CD4-positive, alpha-beta T cell (primary cell): ENCODE measurements at regions of chr15 and their contacts with region 1.

Region 1: GRCh38 chr15:38610748-38611147 is 46.1 kb upstream of the RASGRP1 start:
- DNase-seq: peak in 5 of 14 experiments; percentile 6 to 59 (median 39)
- ATAC-seq: peak; percentile 89
- H3K4me3 ChIP-seq: no peak overlapping the region
- H3K4me3 Mint-ChIP-seq: peak overlapping the region; percentile 1
- H3K27ac ChIP-seq: peak overlapping the region in 1 of 2 donors; percentile 72
- H3K27ac Mint-ChIP-seq: peak overlapping the region; percentile 70
- H3K4me1 ChIP-seq: peaks cover 37% of the 10 kb centered on the region
- H3K4me1 Mint-ChIP-seq: peaks cover 53% of the 10 kb centered on the region
- H3K27me3 ChIP-seq: no peaks in the 10 kb centered on the region
- H3K27me3 Mint-ChIP-seq: no peaks in the 10 kb centered on the region
- CTCF ChIP-seq: no peak

Region 2: GRCh38 chr15:38275959-38276358 is 334.8 kb before region 1 on chr15:
- CTCF ChIA-PET with region 1: no interaction called
- POLR2A ChIA-PET with region 1: no interaction called
- intact Hi-C with region 1: no loop called
- DNase-seq: no peak
- ATAC-seq: no peak
- H3K4me3 ChIP-seq: no peak overlapping the region
- H3K4me3 Mint-ChIP-seq: no peak overlapping the region
- H3K27ac ChIP-seq: no peak overlapping the region
- H3K27ac Mint-ChIP-seq: no peak overlapping the region
- H3K4me1 ChIP-seq: no peaks in the 10 kb centered on the region
- H3K4me1 Mint-ChIP-seq: no peaks in the 10 kb centered on the region
- H3K27me3 ChIP-seq: no peaks in the 10 kb centered on the region
- H3K27me3 Mint-ChIP-seq: peaks cover 14% of the 10 kb centered on the region
- CTCF ChIP-seq: no peak

Region 3: GRCh38 chr15:38631126-38632075 is 20.7 kb after region 1 on chr15:
- CTCF ChIA-PET with region 1: interaction called, 3 read pairs
- POLR2A ChIA-PET with region 1: interaction called, 11 read pairs
- intact Hi-C with region 1: no loop called
- DNase-seq: peak in 2 of 14 experiments; percentile 29 to 38
- ATAC-seq: peak; percentile 21
- H3K4me3 ChIP-seq: no peak overlapping the region
- H3K4me3 Mint-ChIP-seq: no peak overlapping the region
- H3K27ac ChIP-seq: peak overlapping the region in 1 of 2 donors; percentile 13
- H3K27ac Mint-ChIP-seq: peak overlapping the region; percentile 62
- H3K4me1 ChIP-seq: peaks cover 26% of the 10 kb centered on the region
- H3K4me1 Mint-ChIP-seq: peaks cover 25% of the 10 kb centered on the region
- H3K27me3 ChIP-seq: no peaks in the 10 kb centered on the region
- H3K27me3 Mint-ChIP-seq: no peaks in the 10 kb centered on the region
- CTCF ChIP-seq: no peak

Region 4: DNA sequence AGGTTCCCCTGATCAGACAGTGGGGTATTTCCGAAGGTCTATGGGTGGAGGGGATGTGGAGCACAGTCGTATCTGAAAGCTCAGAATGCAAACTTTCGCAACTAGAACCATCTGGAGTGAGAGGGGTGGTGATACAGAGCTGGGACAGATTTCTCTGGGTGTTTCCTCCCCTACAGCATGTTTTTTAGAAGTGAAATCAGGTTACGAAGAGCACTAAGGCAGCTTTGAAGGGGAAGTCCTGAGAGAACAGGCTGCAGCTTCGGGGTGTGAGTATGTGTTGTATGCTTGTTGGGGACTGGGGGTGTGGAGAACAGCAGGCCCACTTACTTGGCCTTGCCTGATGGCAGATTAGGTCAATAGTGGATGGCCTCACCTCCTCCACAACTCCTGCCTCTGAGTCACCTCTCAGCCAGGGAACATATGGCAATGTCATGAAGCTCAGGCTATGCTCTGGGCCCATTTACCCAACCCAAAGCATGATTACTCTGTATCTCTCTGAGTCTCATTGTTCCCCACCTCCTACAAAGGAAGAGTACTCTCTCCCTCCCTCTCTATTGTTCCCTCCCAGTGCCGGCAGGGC is 61.0 kb after region 1 on chr15:
- CTCF ChIA-PET with region 1: no interaction called
- POLR2A ChIA-PET with region 1: interaction called, 3 read pairs
- intact Hi-C with region 1: loop called in 1 of 2 experiments (anchors 5 kb)
- DNase-seq: peak in 11 of 14 experiments; percentile 23 to 91 (median 44)
- ATAC-seq: peak; percentile 51
- H3K4me3 ChIP-seq: no peak overlapping the region
- H3K4me3 Mint-ChIP-seq: peak overlapping the region; percentile 61
- H3K27ac ChIP-seq: peak overlapping the region; percentile 85 to 94
- H3K27ac Mint-ChIP-seq: peak overlapping the region; percentile 95
- H3K4me1 ChIP-seq: peaks cover 80% of the 10 kb centered on the region
- H3K4me1 Mint-ChIP-seq: peaks cover 68% of the 10 kb centered on the region
- H3K27me3 ChIP-seq: no peaks in the 10 kb centered on the region
- H3K27me3 Mint-ChIP-seq: no peaks in the 10 kb centered on the region
- CTCF ChIP-seq: no peak

Region 5: DNA sequence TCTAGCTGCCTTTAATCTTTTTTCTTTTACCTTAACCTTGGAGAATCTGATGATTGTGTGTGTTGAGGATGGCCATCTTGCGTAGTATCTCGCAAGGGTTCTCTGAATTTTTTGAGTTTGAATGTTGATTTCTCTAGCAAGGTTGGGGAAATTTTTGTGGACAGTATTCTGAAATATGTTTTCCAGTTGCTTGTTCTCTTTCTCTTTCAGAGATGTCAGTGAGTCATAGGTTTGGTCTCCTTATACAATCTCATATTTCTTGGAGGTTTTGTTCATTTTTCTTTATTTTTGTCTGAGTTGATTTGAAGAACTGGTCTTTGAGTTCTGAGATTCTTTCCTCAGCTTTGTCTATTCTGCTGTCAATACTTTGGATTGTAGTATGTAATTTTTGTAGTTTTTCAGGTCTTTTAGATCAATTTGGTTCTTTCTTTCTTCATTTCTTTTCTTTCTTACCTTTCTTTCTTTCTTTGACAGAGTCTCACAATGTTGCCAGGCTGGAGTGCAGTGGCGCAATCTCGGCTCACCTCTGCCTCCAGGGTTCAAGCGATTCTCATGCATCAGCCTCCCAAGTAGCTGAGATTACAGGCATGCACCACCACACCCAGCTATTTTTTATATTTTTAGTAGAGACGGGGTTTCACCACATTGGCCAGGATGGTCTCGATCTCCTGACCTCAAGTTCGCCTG is 320.2 kb after region 1 on chr15:
- CTCF ChIA-PET with region 1: no interaction called
- POLR2A ChIA-PET with region 1: no interaction called
- intact Hi-C with region 1: no loop called
- DNase-seq: no peak
- ATAC-seq: no peak
- H3K4me3 ChIP-seq: no peak overlapping the region
- H3K4me3 Mint-ChIP-seq: no peak overlapping the region
- H3K27ac ChIP-seq: no peak overlapping the region
- H3K27ac Mint-ChIP-seq: no peak overlapping the region
- H3K4me1 ChIP-seq: no peaks in the 10 kb centered on the region
- H3K4me1 Mint-ChIP-seq: no peaks in the 10 kb centered on the region
- H3K27me3 ChIP-seq: no peaks in the 10 kb centered on the region
- H3K27me3 Mint-ChIP-seq: peaks cover 14% of the 10 kb centered on the region
- CTCF ChIP-seq: no peak